PC-9 (cell line): ENCODE measurements at regions of chr22 and their contacts with region 1.

Region 1: DNA sequence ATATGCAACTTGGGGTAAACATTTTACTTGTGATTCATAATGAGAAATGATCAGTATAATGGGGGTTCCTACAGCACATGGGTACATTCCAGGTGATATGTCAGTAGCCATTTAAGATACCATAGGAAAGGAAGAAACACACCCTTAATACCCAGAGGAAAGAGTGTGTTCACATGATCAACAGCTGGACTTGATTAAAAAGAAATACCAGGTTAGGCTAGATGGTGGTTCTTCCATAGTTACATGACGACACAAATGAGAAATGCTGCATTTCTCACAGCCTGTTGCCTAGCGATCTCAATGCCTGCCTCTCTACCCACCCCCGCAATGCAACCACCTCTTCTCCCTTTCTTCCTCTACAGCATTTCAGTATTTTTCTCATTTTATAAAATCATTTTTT is 96.8 kb downstream of the TTC28 start:
- DNase-seq: no peak
- H3K4me3 ChIP-seq: no peak overlapping the region
- H3K27ac ChIP-seq: no peak overlapping the region
- H3K4me1 ChIP-seq: no peaks in the 10 kb centered on the region
- H3K27me3 ChIP-seq: no peaks in the 10 kb centered on the region
- CTCF ChIP-seq: no peak

Region 2: GRCh38 chr22:28442264-28442710 is 140.5 kb before region 1 on chr22:
- CTCF ChIA-PET with region 1: no interaction called
- POLR2A ChIA-PET with region 1: no interaction called
- intact Hi-C with region 1: loop called (anchors 10 kb)
- DNase-seq: peak; percentile 55 to 70
- H3K4me3 ChIP-seq: peak overlapping the region; percentile 59
- H3K27ac ChIP-seq: no peak overlapping the region
- H3K4me1 ChIP-seq: 0 out of 2 replicates have a peak, but pooled peaks cover 4% of the 10 kb centered on the region
- H3K27me3 ChIP-seq: no peaks in the 10 kb centered on the region
- CTCF ChIP-seq: peak; percentile 69